Naive thymus-derived CD4-positive, alpha-beta T cell (primary cell): ENCODE measurements at regions of chr7 and their contacts with region 1.

Region 1: GRCh38 chr7:123682690-123683089 is 27.0 kb downstream of the LMOD2 start:
- DNase-seq: peak in 7 of 9 donors; percentile 4 to 53 (median 41)
- ATAC-seq: peak; percentile 45
- H3K4me3 ChIP-seq: no peak overlapping the region
- H3K4me3 Mint-ChIP-seq: no peak overlapping the region
- H3K27ac ChIP-seq: no peak overlapping the region
- H3K27ac Mint-ChIP-seq: no peak overlapping the region
- H3K4me1 ChIP-seq: no peaks in the 10 kb centered on the region
- H3K4me1 Mint-ChIP-seq: no peaks in the 10 kb centered on the region
- H3K27me3 ChIP-seq: no peaks in the 10 kb centered on the region
- H3K27me3 Mint-ChIP-seq: no peaks in the 10 kb centered on the region

Region 2: GRCh38 chr7:123570401-123571182 is 112.1 kb before region 1 on chr7:
- CTCF ChIA-PET with region 1: no interaction called
- POLR2A ChIA-PET with region 1: no interaction called
- intact Hi-C with region 1: no loop called
- DNase-seq: no peak
- ATAC-seq: no peak
- H3K4me3 ChIP-seq: no peak overlapping the region
- H3K4me3 Mint-ChIP-seq: no peak overlapping the region
- H3K27ac ChIP-seq: no peak overlapping the region
- H3K27ac Mint-ChIP-seq: no peak overlapping the region
- H3K4me1 ChIP-seq: no peaks in the 10 kb centered on the region
- H3K4me1 Mint-ChIP-seq: peaks cover 0 to 4% (median 0%) of the 10 kb centered on the region in 7 donors
- H3K27me3 ChIP-seq: no peaks in the 10 kb centered on the region
- H3K27me3 Mint-ChIP-seq: peaks cover 0 to 13% (median 3%) of the 10 kb centered on the region in 5 donors

Region 3: DNA sequence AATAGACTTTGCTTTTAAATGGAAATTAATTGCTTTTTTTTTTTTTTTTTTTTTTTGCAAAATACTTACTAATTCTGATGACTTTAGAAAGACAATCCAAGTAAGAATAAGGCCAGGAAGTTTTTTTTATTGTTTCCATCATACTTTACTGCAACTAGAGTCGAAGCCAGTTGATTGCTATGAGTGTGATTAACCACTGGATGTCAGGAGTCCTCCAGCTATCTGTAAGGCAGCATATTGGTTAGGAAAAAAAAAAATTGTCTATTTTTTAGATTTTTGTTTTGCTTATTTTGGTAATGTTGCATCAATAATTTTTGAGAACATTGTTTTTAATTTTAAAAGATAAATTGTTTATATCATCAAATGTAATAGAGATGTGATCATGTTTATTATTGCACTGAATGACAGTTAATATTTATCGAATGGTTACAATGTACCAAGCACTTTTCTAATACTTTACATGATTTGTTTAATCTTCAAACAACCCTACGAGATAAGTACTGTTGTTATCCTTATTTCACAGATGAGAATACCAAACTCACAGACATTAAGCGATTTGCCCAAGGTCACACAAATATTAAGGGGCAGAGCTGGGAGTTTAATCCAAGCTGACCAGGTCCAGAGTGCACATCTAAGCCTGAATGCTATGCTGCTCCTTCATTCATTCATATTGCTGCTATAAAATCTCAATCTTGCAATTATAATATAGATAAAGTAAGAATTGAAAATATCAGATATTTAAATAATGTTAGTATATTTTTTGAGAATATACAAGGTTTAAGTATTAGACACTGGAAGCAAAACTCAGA is 46.9 kb before region 1 on chr7:
- CTCF ChIA-PET with region 1: no interaction called
- POLR2A ChIA-PET with region 1: no interaction called
- intact Hi-C with region 1: no loop called
- DNase-seq: peak in 1 of 9 donors; percentile 3
- ATAC-seq: no peak
- H3K4me3 ChIP-seq: no peak overlapping the region
- H3K4me3 Mint-ChIP-seq: no peak overlapping the region
- H3K27ac ChIP-seq: no peak overlapping the region
- H3K27ac Mint-ChIP-seq: no peak overlapping the region
- H3K4me1 ChIP-seq: no peaks in the 10 kb centered on the region
- H3K4me1 Mint-ChIP-seq: no peaks in the 10 kb centered on the region
- H3K27me3 ChIP-seq: peaks cover 0 to 4% of the 10 kb centered on the region in 2 donors
- H3K27me3 Mint-ChIP-seq: peaks cover 19 to 31% (median 26%) of the 10 kb centered on the region in 5 donors

Region 4: DNA sequence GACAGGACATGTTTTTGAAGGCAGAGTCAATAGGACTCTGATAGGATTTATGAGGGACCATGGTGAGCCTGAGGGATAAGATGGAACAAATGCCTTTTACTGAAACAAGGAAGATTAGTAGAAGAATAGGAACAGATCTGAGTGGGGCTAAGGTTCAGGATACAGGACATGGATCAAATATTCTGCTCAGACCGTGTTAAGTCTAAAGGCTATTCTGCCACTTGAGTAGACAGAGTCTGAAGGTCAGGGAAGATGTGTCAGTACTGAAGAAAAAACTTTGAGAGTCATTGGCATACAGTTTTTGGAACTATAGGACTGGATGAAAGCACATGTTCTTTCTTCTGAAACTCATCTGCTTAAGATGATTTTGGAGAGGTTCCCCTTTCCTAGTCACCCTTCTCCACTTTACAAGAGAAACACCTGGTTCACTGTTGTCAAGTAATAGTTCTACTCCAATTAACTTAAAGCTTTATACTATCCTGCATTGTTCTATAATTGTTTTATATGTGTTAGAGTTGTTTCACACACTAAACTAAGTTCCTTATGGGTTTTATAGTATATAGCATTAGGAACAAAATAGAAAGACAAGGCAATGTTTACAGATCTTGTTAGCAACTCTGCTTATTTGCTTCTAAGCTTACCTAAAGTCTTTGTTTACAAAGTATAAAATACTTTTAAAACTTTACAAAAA is 22.7 kb after region 1 on chr7:
- CTCF ChIA-PET with region 1: no interaction called
- POLR2A ChIA-PET with region 1: no interaction called
- intact Hi-C with region 1: loop called (anchors 2 kb)
- DNase-seq: no peak
- ATAC-seq: no peak
- H3K4me3 ChIP-seq: no peak overlapping the region
- H3K4me3 Mint-ChIP-seq: no peak overlapping the region
- H3K27ac ChIP-seq: no peak overlapping the region
- H3K27ac Mint-ChIP-seq: peak overlapping the region in 6 of 9 donors; percentile 0 to 60 (median 18)
- H3K4me1 ChIP-seq: no peaks in the 10 kb centered on the region
- H3K4me1 Mint-ChIP-seq: peaks cover 0 to 8% (median 1%) of the 10 kb centered on the region in 7 donors
- H3K27me3 ChIP-seq: no peaks in the 10 kb centered on the region
- H3K27me3 Mint-ChIP-seq: no peaks in the 10 kb centered on the region

Region 5: GRCh38 chr7:123865517-123866117 is 182.9 kb after region 1 on chr7:
- CTCF ChIA-PET with region 1: interaction called, 15 read pairs
- POLR2A ChIA-PET with region 1: no interaction called
- intact Hi-C with region 1: loop called (anchors 1 kb)
- DNase-seq: peak in 8 of 9 donors; percentile 22 to 60 (median 46)
- ATAC-seq: peak; percentile 81
- H3K4me3 ChIP-seq: no peak overlapping the region
- H3K4me3 Mint-ChIP-seq: no peak overlapping the region
- H3K27ac ChIP-seq: no peak overlapping the region
- H3K27ac Mint-ChIP-seq: no peak overlapping the region
- H3K4me1 ChIP-seq: no peaks in the 10 kb centered on the region
- H3K4me1 Mint-ChIP-seq: no peaks in the 10 kb centered on the region
- H3K27me3 ChIP-seq: no peaks in the 10 kb centered on the region
- H3K27me3 Mint-ChIP-seq: peaks cover 0 to 13% (median 4%) of the 10 kb centered on the region in 5 donors

Region 6: DNA sequence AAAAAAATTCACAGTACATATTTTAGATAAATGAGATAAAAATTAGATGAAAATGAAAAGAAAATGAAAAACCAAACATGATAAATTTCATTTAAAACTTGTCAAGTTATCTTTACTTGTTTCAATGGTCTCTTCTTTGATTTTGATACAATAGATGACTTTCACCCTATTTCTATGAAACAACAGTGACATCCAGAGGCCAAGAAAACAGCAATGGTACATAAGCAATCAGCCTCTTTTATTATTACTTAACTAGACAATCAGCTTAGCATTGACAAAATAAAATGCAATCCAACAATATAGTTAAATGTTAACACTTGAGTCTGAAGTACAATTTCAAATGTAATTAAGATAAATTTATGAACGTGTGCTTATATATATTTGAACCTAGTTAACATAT is 1157.7 kb after region 1 on chr7:
- CTCF ChIA-PET with region 1: no interaction called
- POLR2A ChIA-PET with region 1: no interaction called
- intact Hi-C with region 1: loop called in 1 of 2 experiments (anchors 5 kb)
- DNase-seq: no peak
- ATAC-seq: no peak
- H3K4me3 ChIP-seq: no peak overlapping the region
- H3K4me3 Mint-ChIP-seq: no peak overlapping the region
- H3K27ac ChIP-seq: no peak overlapping the region
- H3K27ac Mint-ChIP-seq: no peak overlapping the region
- H3K4me1 ChIP-seq: no peaks in the 10 kb centered on the region
- H3K4me1 Mint-ChIP-seq: peaks cover 0 to 10% (median 0%) of the 10 kb centered on the region in 7 donors
- H3K27me3 ChIP-seq: no peaks in the 10 kb centered on the region
- H3K27me3 Mint-ChIP-seq: no peaks in the 10 kb centered on the region